ENCODE measurements at regions of chr17 and their contacts with region 1.

Region 1: GRCh38 chr17:409848-410545 is 57.4 kb upstream of the RPH3AL start:
- DNase-seq: peak; percentile 100
- ATAC-seq: peak; percentile 93
- H3K4me3 ChIP-seq: peak overlapping the region; percentile 89
- H3K27ac ChIP-seq: peak overlapping the region; percentile 90
- H3K4me1 ChIP-seq: peaks cover 23% of the 10 kb centered on the region
- H3K27me3 ChIP-seq: no peaks in the 10 kb centered on the region
- CTCF ChIP-seq: no peak

Region 2: DNA sequence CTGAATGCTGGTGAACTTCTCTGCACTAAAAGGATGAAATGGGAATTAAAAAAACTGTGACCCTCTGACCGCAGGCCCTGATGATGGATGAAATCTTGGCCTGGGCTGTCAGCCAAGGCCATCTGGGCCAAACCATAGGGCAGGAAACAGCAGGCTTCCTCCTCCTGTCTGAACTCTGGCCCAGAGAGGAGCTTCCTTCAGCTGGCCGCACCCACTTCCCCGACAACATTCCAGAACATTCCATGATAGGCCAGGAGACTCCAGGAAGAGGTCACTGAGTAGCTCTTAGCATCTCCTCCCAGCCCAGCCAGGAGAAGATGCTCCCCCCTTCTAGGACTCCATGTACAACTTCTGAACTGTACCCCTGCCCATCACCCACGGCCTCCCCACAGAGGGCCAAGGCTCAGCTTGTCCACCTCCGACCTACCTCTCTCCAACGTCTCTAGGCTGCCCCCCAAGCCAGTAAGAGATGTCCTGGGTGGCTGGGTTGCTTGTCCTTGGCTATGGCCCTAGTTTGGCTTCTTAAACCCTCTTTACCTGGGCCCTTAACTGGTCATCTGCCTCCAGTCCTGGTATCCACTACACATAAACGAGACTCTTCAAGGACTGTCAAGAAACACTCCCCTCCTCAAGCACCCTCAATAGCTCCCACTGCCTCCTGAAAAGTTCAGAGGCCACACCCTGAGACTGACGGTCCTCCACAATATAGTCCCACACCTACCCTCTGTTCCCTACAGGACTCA is 59.1 kb before region 1 on chr17:
- intact Hi-C with region 1: no loop called
- DNase-seq: peak; percentile 82
- ATAC-seq: peak; percentile 67
- H3K4me3 ChIP-seq: peak overlapping the region; percentile 25
- H3K27ac ChIP-seq: peak overlapping the region; percentile 87
- H3K4me1 ChIP-seq: peaks cover 59% of the 10 kb centered on the region
- H3K27me3 ChIP-seq: no peaks in the 10 kb centered on the region
- CTCF ChIP-seq: no peak

Region 3: DNA sequence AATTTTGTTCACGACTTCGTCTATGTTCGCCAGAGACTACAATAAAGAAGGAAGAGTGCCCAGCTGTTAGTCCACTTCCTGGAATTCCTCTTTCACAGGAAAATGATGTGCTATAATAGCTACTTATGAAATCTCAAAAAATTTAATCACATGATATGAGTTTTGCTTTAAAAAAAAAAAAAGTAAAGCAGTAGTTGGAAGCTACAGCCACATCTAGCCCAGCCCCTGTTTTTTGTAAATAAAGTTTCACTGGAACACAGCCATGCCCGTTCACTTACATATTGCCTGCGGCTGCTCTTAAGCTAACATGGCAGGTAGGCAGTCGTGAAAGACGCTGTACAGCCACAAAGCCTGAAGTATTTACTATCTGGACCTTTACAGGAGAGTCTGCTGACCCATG is 289.3 kb after region 1 on chr17:
- intact Hi-C with region 1: loop called (anchors 5 kb)
- DNase-seq: no peak
- ATAC-seq: peak; percentile 69
- H3K4me3 ChIP-seq: no peak overlapping the region
- H3K27ac ChIP-seq: peak overlapping the region; percentile 33
- H3K4me1 ChIP-seq: peaks cover 21% of the 10 kb centered on the region
- H3K27me3 ChIP-seq: no peaks in the 10 kb centered on the region
- CTCF ChIP-seq: no peak